ENCODE measurements at regions of chr16 and their contacts with region 1.

Region 1: GRCh38 chr16:19521471-19522396 is at the start of gene GDE1:
- DNase-seq: peak; percentile 82 to 97
- H3K4me3 ChIP-seq: peak within 1 kb of the TSS; percentile 82 to 89
- H3K27ac ChIP-seq: peak within 1 kb of the TSS; percentile 85 to 91
- H3K4me1 ChIP-seq: peaks cover 6 to 31% of the 10 kb centered on the region in 2 donors
- H3K27me3 ChIP-seq: no peaks in the 10 kb centered on the region
- CTCF ChIP-seq: peak; percentile 17 to 55 (median 50)
- total RNA-seq, gene GDE1: 27.4 TPM

Region 2: GRCh38 chr16:19118938-19119431 is 402.7 kb before region 1 on chr16:
- intact Hi-C with region 1: loop called (anchors 2 kb)
- DNase-seq: peak in 1 of 2 donors; percentile 82
- H3K4me3 ChIP-seq: peak overlapping the region; percentile 23 to 55
- H3K27ac ChIP-seq: peak overlapping the region; percentile 71 to 80
- H3K4me1 ChIP-seq: peaks cover 12 to 49% of the 10 kb centered on the region in 2 donors
- H3K27me3 ChIP-seq: no peaks in the 10 kb centered on the region
- CTCF ChIP-seq: no peak

Region 3: GRCh38 chr16:19710191-19710908 is 188.6 kb after region 1 on chr16:
- intact Hi-C with region 1: no loop called
- DNase-seq: no peak
- H3K4me3 ChIP-seq: no peak overlapping the region
- H3K27ac ChIP-seq: no peak overlapping the region
- H3K4me1 ChIP-seq: no peaks in the 10 kb centered on the region
- H3K27me3 ChIP-seq: no peaks in the 10 kb centered on the region
- CTCF ChIP-seq: no peak